ENCODE measurements at regions of chr22 and their contacts with region 1.

Region 1: GRCh38 chr22:35350539-35351503 is 30.1 kb upstream of the HMOX1 start:
- DNase-seq: peak; percentile 94
- ATAC-seq: peak; percentile 94
- H3K4me3 Mint-ChIP-seq: peak overlapping the region; percentile 76
- H3K27ac Mint-ChIP-seq: peak overlapping the region; percentile 57
- H3K4me1 Mint-ChIP-seq: peaks cover 28% of the 10 kb centered on the region
- H3K27me3 Mint-ChIP-seq: peaks cover 6% of the 10 kb centered on the region

Region 2: GRCh38 chr22:35376728-35377472 is 26.1 kb after region 1 on chr22:
- CTCF ChIA-PET with region 1: interaction called, 12 read pairs
- POLR2A ChIA-PET with region 1: interaction called, 3 read pairs
- DNase-seq: peak; percentile 34
- ATAC-seq: no peak
- H3K4me3 Mint-ChIP-seq: no peak overlapping the region
- H3K27ac Mint-ChIP-seq: peak overlapping the region; percentile 31
- H3K4me1 Mint-ChIP-seq: peaks cover 28% of the 10 kb centered on the region
- H3K27me3 Mint-ChIP-seq: peaks cover 22% of the 10 kb centered on the region

Measured in activated CD8-positive, alpha-beta T cell treated with anti-CD3 and anti-CD28 coated beads, Interleukin-2, amount 10 ng/mL, durations not matched to agents 7 days and 5 days (primary cell).